ENCODE measurements at regions of chr3 and their contacts with region 1.

Region 1: DNA sequence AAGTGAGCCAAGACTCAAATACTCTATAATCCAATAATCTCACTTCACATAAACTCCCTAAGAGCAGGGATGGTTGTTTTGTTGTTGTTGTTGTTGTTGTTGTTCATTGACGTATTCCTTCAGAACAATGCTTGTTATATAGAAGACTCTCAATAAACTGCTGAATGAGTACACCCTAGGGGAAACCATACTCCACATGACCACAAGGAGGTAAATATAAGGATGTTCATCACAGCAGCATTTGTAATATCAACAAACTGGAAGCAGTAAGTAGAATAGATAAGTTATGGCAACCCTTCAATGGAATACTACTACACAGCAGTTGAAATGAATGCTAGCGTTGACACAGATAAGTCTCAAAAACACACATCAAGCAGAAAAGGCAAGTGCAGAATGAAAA is 62.4 kb upstream of the STIMATE start:
- DNase-seq: no peak
- H3K4me3 ChIP-seq: no peak overlapping the region
- H3K27ac ChIP-seq: no peak overlapping the region
- H3K4me1 ChIP-seq: no peaks in the 10 kb centered on the region
- H3K27me3 ChIP-seq: no peaks in the 10 kb centered on the region
- CTCF ChIP-seq: no peak
- POLR2A ChIP-seq: no peak

Region 2: GRCh38 chr3:52867098-52867800 is 92.5 kb before region 1 on chr3:
- CTCF ChIA-PET with region 1: no interaction called
- POLR2A ChIA-PET with region 1: no interaction called
- dilution Hi-C with region 1: no loop called
- intact Hi-C with region 1: no loop called
- DNase-seq: no peak
- H3K4me3 ChIP-seq: no peak overlapping the region
- H3K27ac ChIP-seq: no peak overlapping the region
- H3K4me1 ChIP-seq: no peaks in the 10 kb centered on the region
- H3K27me3 ChIP-seq: no peaks in the 10 kb centered on the region
- CTCF ChIP-seq: no peak
- POLR2A ChIP-seq: no peak

Region 3: DNA sequence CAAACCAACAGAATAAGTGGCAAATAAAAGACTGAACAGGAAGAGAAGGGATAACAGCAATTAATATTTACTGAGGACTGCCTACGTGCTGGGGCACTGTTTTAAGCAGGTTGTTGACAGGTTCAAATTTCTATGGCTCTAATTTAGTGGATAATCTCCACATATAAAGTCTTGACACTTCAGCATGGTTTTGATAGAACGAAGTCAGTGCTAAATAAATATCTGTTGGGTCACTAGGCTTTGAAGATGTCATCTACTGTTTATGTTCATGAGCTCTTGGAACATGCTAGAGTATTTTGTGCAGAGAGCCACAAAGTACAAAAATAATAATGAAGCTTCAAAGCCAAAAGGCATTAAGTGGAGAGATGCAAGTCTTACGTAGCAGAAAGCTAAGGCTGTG is 12.1 kb after region 1 on chr3:
- CTCF ChIA-PET with region 1: interaction called, 10 read pairs
- POLR2A ChIA-PET with region 1: no interaction called
- dilution Hi-C with region 1: no loop called
- intact Hi-C with region 1: no loop called
- DNase-seq: no peak
- H3K4me3 ChIP-seq: no peak overlapping the region
- H3K27ac ChIP-seq: no peak overlapping the region
- H3K4me1 ChIP-seq: no peaks in the 10 kb centered on the region
- H3K27me3 ChIP-seq: no peaks in the 10 kb centered on the region
- CTCF ChIP-seq: no peak
- POLR2A ChIP-seq: no peak